HepG2 (cell line): ENCODE measurements at regions of chr6 and their contacts with region 1.

Region 1: DNA sequence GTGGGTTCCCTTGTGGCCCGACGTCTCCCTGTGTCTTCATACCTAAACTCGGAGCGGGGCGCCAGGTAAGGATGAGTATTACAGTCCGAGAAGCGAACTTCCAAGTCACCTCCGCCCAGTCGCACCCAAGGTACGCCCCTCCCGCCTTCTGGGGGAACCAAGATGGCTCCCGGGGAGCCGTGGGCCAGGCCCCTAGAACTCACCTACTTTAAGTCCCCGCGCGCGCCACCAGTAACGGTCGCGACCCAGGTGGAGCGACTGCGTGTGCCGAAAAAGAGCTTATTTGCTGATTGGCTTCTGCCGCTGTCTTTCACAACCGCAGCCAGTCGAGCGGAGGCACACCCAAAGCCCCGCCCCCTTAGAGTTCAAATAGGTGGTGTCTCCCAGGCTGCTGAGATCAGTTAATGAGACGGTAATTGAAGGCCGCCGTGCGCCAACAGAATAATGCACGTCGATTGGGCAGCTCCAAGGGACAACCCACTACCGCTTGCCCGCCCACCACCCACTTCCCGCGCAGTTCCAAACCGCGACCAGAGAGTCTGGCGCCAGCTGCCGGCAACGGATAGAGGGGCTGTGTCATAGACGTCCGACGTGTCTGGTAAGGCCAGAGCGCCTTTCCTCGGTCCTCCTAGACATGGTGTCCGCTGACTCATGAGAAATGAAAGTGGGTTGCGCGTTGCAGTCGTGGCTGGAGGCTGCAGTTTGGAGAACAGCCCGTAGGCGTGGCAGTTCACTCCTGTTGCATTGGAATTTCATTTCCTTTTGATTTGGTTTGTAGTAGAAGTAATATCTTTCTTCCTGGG is at the start of gene MDC1:
- DNase-seq: peak; percentile 100
- ATAC-seq: peak; percentile 88
- H3K4me3 ChIP-seq: peak within 1 kb of the TSS; percentile 68 to 84 (median 76)
- H3K27ac ChIP-seq: peak within 1 kb of the TSS; percentile 94
- H3K4me1 ChIP-seq: peaks cover 37% of the 10 kb centered on the region
- H3K27me3 ChIP-seq: no peaks in the 10 kb centered on the region; a peak in 1 of 5 replicates
- CTCF ChIP-seq: peak; percentile 69
- EP300 ChIP-seq: peak; percentile 77 to 82; a peak in 3 of 4 replicates
- POLR2A ChIP-seq: peak; percentile 91 to 96
- RAD21 ChIP-seq: peak; percentile 39; the same call in 1 of the 2 replicates
- total RNA-seq, gene MDC1: 8.4 and 20.5 TPM in 2 replicates

Region 2: GRCh38 chr6:30075161-30075986 is 641.9 kb before region 1 on chr6 and contains the start of gene RNF39:
- CTCF ChIA-PET with region 1: no interaction called
- POLR2A ChIA-PET with region 1: no interaction called
- in situ Hi-C with region 1: no loop called
- intact Hi-C with region 1: no loop called
- DNase-seq: peak; percentile 55
- ATAC-seq: peak; percentile 66
- H3K4me3 ChIP-seq: peak within 1 kb of the TSS; percentile 50 to 77 (median 67)
- H3K27ac ChIP-seq: no peak within 1 kb of the TSS
- H3K4me1 ChIP-seq: peaks cover 47% of the 10 kb centered on the region
- H3K27me3 ChIP-seq: peaks cover 1 to 40% of the 10 kb centered on the region in 2 experiments; a peak in 4 of 5 replicates
- CTCF ChIP-seq: peak; percentile 90
- EP300 ChIP-seq: no peak
- POLR2A ChIP-seq: no peak
- RAD21 ChIP-seq: peak; percentile 40
- total RNA-seq, gene RNF39: 0.13 TPM in 2 replicates

Region 3: GRCh38 chr6:30483677-30484279 is 233.5 kb before region 1 on chr6:
- CTCF ChIA-PET with region 1: no interaction called
- POLR2A ChIA-PET with region 1: no interaction called
- in situ Hi-C with region 1: loop called (anchors 10 kb)
- intact Hi-C with region 1: loop called (anchors 5 kb)
- DNase-seq: peak; percentile 66
- ATAC-seq: no peak
- H3K4me3 ChIP-seq: no peak overlapping the region
- H3K27ac ChIP-seq: no peak overlapping the region
- H3K4me1 ChIP-seq: peaks cover 26% of the 10 kb centered on the region
- H3K27me3 ChIP-seq: peaks cover 0 to 29% of the 10 kb centered on the region in 2 experiments; a peak in 3 of 5 replicates
- CTCF ChIP-seq: peak; percentile 81
- EP300 ChIP-seq: no peak
- POLR2A ChIP-seq: no peak
- RAD21 ChIP-seq: peak; percentile 58; the same call in 1 of the 2 replicates

Region 4: DNA sequence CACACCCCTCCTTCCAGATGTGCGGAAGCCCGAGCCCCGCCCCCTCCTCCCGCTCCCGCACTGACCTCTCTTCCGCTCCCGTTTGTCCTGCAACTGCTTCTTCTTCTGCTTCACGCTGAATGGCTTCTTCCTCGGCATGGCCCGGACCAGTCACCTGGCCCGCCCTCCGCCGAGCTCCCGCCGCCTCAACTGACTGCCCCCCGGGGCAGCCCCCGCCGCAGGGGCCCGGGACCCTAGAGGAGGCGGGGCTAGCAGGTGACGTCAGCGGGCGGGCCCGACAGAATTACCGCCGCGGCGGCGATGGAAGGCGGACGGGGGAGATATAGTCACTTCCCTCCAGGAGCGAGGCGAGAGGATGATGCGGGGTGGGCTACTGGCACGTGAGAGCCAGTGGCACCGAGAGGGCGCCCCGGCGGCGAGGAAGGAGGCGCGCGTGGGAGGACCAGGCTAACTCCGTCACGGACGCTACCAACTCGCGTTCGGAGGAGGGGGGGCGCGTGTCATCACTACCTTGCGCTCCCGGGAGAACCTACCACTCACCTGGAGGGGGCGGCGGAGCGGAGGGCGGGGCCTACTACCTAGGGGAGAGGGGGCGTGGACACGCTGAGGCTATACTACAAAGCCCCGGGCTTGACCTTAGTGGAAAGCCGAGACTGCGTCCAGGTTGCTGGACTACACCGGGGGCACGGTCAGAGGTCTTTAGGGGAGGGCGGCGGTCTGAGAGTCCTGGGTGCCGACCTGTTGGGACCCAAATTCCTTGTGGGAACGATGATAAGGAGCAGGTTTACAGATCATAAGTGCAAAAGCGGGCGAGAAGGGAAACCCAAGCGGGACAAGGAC is 161.0 kb before region 1 on chr6 and contains the start of gene GNL1:
- CTCF ChIA-PET with region 1: no interaction called
- POLR2A ChIA-PET with region 1: interaction called, 9 read pairs
- in situ Hi-C with region 1: no loop called
- intact Hi-C with region 1: loop called (anchors 2 kb)
- DNase-seq: peak; percentile 94
- ATAC-seq: peak; percentile 85
- H3K4me3 ChIP-seq: peak within 1 kb of the TSS; percentile 87 to 93 (median 90)
- H3K27ac ChIP-seq: peak within 1 kb of the TSS; percentile 94
- H3K4me1 ChIP-seq: peaks cover 26% of the 10 kb centered on the region
- H3K27me3 ChIP-seq: no peaks in the 10 kb centered on the region; a peak in 1 of 5 replicates
- CTCF ChIP-seq: no peak
- EP300 ChIP-seq: peak in 1 of 2 experiments; percentile 49; a peak in 2 of 4 replicates
- POLR2A ChIP-seq: peak; percentile 82 to 85; a peak in 3 of 4 replicates
- RAD21 ChIP-seq: peak; percentile 44; the same call in 1 of the 2 replicates
- total RNA-seq, gene GNL1: 54.8 and 55.6 TPM in 2 replicates

Region 5: GRCh38 chr6:30672445-30673253 is 44.6 kb before region 1 on chr6 and contains the start of gene DHX16:
- CTCF ChIA-PET with region 1: interaction called, 130 read pairs
- POLR2A ChIA-PET with region 1: interaction called, 17 read pairs
- in situ Hi-C with region 1: loop called (anchors 5 kb)
- intact Hi-C with region 1: no loop called
- DNase-seq: peak; percentile 97
- ATAC-seq: peak; percentile 89
- H3K4me3 ChIP-seq: peak within 1 kb of the TSS; percentile 76 to 95 (median 82)
- H3K27ac ChIP-seq: peak within 1 kb of the TSS; percentile 67
- H3K4me1 ChIP-seq: peaks cover 23% of the 10 kb centered on the region
- H3K27me3 ChIP-seq: no peaks in the 10 kb centered on the region; a peak in 1 of 5 replicates
- CTCF ChIP-seq: peak; percentile 91
- EP300 ChIP-seq: peak in 1 of 2 experiments; percentile 53; a peak in 3 of 4 replicates
- POLR2A ChIP-seq: peak; percentile 79 to 81
- RAD21 ChIP-seq: peak; percentile 71
- total RNA-seq, gene DHX16: 48.2 and 58.5 TPM in 2 replicates

Region 6: GRCh38 chr6:30686908-30687658 is 30.2 kb before region 1 on chr6:
- CTCF ChIA-PET with region 1: interaction called, 11 read pairs
- POLR2A ChIA-PET with region 1: interaction called, 92 read pairs
- in situ Hi-C with region 1: no loop called
- intact Hi-C with region 1: loop called (anchors 1 kb)
- DNase-seq: peak; percentile 49
- ATAC-seq: peak; percentile 50
- H3K4me3 ChIP-seq: peak overlapping the region; percentile 77 to 84 (median 81)
- H3K27ac ChIP-seq: peak overlapping the region; percentile 43
- H3K4me1 ChIP-seq: peaks cover 79% of the 10 kb centered on the region
- H3K27me3 ChIP-seq: no peaks in the 10 kb centered on the region
- CTCF ChIP-seq: peak; percentile 6; the same call in 1 of the 2 replicates
- EP300 ChIP-seq: peak in 1 of 2 experiments; percentile 55; a peak in 1 of 4 replicates
- POLR2A ChIP-seq: peak in 1 of 2 experiments; percentile 67; a peak in 3 of 4 replicates
- RAD21 ChIP-seq: no peak

Region 7: DNA sequence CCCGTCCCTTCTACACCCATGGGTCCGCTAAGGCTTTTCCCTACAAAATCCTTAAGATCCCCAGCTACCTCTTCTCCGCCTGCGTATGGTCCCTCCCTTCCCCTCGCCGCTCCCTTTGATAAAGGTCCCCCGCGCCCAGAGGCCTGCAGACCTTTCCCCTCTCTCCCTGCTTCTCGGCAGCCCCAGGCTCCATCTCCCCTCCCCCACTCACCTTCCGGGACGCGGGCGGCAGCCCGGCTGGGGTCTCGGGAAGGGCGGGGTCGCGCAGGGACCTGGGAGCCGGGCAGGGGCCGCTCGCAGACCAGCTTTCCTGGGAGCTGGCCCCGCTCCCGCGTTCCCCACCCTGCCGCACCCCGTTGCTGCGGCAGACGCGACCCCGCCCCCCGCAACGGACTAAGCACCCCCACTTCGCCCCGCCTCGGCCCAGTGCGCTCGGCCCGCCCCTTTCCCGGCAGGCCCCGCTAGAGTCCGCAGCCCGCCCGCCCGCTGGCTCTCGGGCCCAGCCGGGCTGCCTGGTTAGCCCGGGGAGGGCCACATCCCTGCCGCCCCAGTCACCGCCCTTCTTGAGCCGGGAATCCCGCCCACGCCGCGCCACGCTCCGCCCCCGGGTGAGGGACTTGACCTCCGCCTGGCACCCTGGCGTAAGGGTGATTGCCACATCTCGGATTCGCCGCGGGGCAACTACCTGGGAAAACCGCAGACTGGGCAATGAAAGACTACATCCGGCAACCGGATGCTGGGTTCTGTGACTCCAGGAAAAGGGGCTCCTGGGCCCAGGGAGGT is 25.3 kb after region 1 on chr6 and contains the start of gene FLOT1:
- CTCF ChIA-PET with region 1: no interaction called
- POLR2A ChIA-PET with region 1: interaction called, 27 read pairs
- in situ Hi-C with region 1: no loop called
- intact Hi-C with region 1: no loop called
- DNase-seq: peak; percentile 97
- ATAC-seq: peak; percentile 87
- H3K4me3 ChIP-seq: peak within 1 kb of the TSS; percentile 91 to 98 (median 98)
- H3K27ac ChIP-seq: peak within 1 kb of the TSS; percentile 81
- H3K4me1 ChIP-seq: peaks cover 78% of the 10 kb centered on the region
- H3K27me3 ChIP-seq: no peaks in the 10 kb centered on the region; a peak in 1 of 5 replicates
- CTCF ChIP-seq: peak; percentile 38
- EP300 ChIP-seq: peak; percentile 5 to 52; a peak in 2 of 4 replicates
- POLR2A ChIP-seq: no peak; a peak in 2 of 4 replicates
- RAD21 ChIP-seq: peak; percentile 64
- total RNA-seq, gene FLOT1: 77.8 and 82.3 TPM in 2 replicates

Region 8: DNA sequence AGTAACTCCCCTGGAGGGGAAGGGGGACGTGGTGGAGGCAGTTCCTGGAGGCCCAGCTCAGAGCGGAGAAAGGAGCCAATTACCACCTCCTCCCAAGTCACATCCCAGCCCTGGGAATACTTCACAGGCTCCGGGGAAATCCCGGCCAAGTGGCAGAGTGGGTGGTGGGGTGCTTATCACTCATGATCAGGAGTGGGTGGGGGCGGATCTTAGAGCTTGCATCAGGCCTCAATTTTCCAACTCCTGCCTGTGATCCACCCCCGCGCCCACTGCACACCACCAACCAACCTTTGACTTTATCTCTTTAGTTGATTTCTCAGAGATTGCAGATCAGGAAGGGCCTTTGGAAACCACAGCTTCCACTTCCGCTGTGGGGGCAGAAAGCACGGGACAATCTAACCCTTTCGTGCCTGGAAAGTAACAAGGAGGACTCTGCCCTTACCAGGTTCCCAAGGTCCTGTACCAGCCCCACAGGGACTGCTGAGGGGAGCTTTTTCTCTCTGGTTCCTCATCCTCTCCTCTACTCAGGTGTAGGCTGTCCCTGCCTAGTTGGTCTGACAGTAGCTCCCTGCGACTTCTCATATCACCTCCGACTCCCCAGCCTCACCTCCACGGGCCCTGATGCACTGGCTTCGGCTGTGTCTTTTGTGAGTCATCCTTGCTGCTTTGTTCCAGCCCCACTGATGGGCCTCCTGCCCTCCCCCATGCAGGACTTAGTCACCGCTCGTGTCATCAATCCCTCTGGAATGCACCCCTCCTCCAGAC is 52.0 kb after region 1 on chr6:
- CTCF ChIA-PET with region 1: no interaction called
- POLR2A ChIA-PET with region 1: interaction called, 14 read pairs
- in situ Hi-C with region 1: no loop called
- intact Hi-C with region 1: no loop called
- DNase-seq: peak; percentile 96
- ATAC-seq: peak; percentile 90
- H3K4me3 ChIP-seq: peak overlapping the region; percentile 35 to 69 (median 44)
- H3K27ac ChIP-seq: peak overlapping the region; percentile 98
- H3K4me1 ChIP-seq: peaks cover 79% of the 10 kb centered on the region
- H3K27me3 ChIP-seq: no peaks in the 10 kb centered on the region
- CTCF ChIP-seq: no peak; the same call in 1 of the 2 replicates
- EP300 ChIP-seq: peak; percentile 90 to 91
- POLR2A ChIP-seq: peak; percentile 88 to 91
- RAD21 ChIP-seq: peak; percentile 27; the same call in 1 of the 2 replicates

Region 9: GRCh38 chr6:30926644-30927043 is 209.4 kb after region 1 on chr6:
- CTCF ChIA-PET with region 1: no interaction called
- POLR2A ChIA-PET with region 1: no interaction called
- in situ Hi-C with region 1: no loop called
- intact Hi-C with region 1: no loop called
- DNase-seq: no peak
- ATAC-seq: no peak
- H3K4me3 ChIP-seq: no peak overlapping the region
- H3K27ac ChIP-seq: no peak overlapping the region
- H3K4me1 ChIP-seq: no peaks in the 10 kb centered on the region
- H3K27me3 ChIP-seq: peaks cover 0 to 7% of the 10 kb centered on the region in 2 experiments; a peak in 1 of 5 replicates
- CTCF ChIP-seq: no peak
- EP300 ChIP-seq: no peak
- POLR2A ChIP-seq: no peak
- RAD21 ChIP-seq: no peak